ENCODE measurements at regions of chr6 and their contacts with region 1.

Region 1: DNA sequence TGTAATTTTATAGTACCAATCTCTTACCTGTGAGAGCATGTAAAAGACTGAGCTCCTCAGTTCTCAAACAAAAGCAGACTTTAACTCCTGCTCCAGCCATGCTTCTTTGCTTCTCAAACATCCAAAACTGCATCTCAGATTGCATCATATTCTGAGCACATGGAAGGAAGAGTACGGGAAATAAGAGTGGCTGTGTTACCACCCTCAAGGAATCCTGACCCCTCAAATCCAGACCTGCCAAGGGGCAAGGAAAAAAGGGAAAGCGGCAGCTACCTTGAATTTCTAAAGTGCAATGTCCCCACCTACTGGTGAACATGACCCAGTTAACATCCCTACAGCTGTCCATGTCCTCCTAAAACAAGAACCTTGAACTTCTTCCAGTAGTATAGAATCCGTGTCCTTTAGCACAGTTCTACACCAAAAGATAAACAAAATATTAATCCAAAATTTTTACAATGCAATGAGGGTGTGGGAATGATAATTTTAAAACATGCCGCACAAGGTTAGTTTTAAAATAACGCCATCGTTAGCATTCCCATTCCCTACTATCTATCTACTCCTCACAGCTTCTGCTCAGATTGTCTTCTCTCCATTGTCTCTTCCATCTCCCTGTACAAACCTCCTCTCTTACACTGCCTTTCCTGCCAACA is 34.1 kb upstream of the HLA-DQB1 start:
- DNase-seq: peak; percentile 17 to 45 (median 21)
- H3K4me3 ChIP-seq: no peak overlapping the region
- H3K27ac ChIP-seq: no peak overlapping the region
- H3K4me1 ChIP-seq: no peaks in the 10 kb centered on the region
- H3K27me3 ChIP-seq: no peaks in the 10 kb centered on the region
- CTCF ChIP-seq: peak in 2 of 3 donors; percentile 43 to 57
- EP300 ChIP-seq: no peak
- POLR2A ChIP-seq: no peak

Region 2: DNA sequence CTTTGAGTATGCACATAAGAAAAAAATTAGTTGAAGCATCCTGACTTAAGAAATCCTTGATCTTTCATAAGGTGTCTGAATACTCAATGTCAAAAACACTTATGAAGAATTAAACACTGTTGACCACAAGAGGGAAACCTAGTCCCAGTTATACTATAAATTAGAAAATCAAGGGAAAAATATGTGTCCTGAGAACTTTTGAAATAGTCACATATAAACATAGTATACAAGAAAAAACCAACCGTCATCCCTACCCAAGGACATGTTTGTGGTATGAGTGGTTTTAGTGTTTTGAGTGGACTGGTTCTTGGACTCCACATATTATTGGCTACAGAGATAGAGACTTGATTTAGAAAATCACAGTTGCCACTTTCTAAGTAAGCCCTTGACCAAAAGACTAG is 268.5 kb before region 1 on chr6:
- intact Hi-C with region 1: loop called in 3 of 4 experiments (anchors 5 to 10 kb)
- DNase-seq: no peak
- H3K4me3 ChIP-seq: no peak overlapping the region
- H3K27ac ChIP-seq: no peak overlapping the region
- H3K4me1 ChIP-seq: no peaks in the 10 kb centered on the region
- H3K27me3 ChIP-seq: peaks cover 3% of the 10 kb centered on the region
- CTCF ChIP-seq: peak; percentile 32 to 55 (median 32)
- EP300 ChIP-seq: no peak
- POLR2A ChIP-seq: no peak

Region 3: DNA sequence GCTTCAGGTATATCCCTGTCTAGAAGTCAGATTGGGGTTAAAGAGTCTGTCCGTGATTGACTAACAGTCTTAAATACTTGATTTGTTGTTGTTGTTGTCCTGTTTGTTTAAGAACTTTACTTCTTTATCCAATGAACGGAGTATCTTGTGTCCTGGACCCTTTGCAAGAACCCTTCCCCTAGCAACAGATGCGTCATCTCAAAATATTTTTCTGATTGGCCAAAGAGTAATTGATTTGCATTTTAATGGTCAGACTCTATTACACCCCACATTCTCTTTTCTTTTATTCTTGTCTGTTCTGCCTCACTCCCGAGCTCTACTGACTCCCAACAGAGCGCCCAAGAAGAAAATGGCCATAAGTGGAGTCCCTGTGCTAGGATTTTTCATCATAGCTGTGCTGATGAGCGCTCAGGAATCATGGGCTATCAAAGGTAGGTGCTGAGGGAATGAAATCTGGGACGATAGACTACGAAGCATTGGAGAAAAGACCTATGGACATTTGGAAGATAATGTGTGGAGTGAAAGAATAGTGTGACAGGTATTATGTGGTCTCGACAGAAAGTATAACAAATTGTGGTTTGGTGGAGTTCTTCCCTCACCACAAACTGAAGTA is 260.8 kb before region 1 on chr6 and contains the start of gene HLA-DRA:
- intact Hi-C with region 1: loop called in 3 of 4 experiments (anchors 5 to 10 kb)
- DNase-seq: no peak
- H3K4me3 ChIP-seq: no peak within 1 kb of the TSS
- H3K27ac ChIP-seq: no peak within 1 kb of the TSS
- H3K4me1 ChIP-seq: no peaks in the 10 kb centered on the region
- H3K27me3 ChIP-seq: no peaks in the 10 kb centered on the region
- CTCF ChIP-seq: no peak
- EP300 ChIP-seq: no peak
- POLR2A ChIP-seq: no peak
- total RNA-seq, gene HLA-DRA: 19.5 to 262 (median 130) TPM

Region 4: GRCh38 chr6:32853541-32854375 is 153.2 kb after region 1 on chr6 and contains the starts of genes PSMB9 and TAP1:
- intact Hi-C with region 1: no loop called
- DNase-seq: peak; percentile 91 to 96 (median 93)
- H3K4me3 ChIP-seq: peak within 1 kb of the TSS; percentile 94
- H3K27ac ChIP-seq: peak within 1 kb of the TSS; percentile 98
- H3K4me1 ChIP-seq: peaks cover 10% of the 10 kb centered on the region
- H3K27me3 ChIP-seq: no peaks in the 10 kb centered on the region
- CTCF ChIP-seq: peak; percentile 75 to 93 (median 91)
- EP300 ChIP-seq: peak; percentile 87
- POLR2A ChIP-seq: peak; percentile 92
- total RNA-seq, gene PSMB9: 9.5 to 28.3 (median 20.4) TPM
- total RNA-seq, gene TAP1: 17.7 to 30.7 (median 23.3) TPM

Region 5: DNA sequence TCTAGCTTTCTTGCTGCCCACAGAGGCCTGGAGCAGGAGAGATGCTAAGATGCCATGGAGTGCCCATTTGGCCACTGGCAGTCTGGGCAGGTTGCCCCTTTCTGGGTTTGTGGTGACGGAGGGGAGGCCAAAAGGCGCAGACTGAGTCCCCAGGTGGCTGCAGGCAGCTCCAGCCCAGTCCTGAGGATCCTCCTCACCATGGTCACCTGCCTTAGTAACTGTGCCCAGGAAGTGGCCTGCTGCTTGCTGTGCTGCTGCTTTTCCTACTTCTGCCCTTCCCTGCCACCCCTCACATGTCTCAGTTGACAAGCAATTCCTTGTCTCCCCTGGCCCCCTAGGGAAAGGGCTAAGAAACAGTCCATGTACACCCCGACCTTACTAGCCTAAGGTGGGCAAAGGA is 655.8 kb after region 1 on chr6:
- intact Hi-C with region 1: no loop called
- DNase-seq: no peak
- H3K4me3 ChIP-seq: no peak overlapping the region
- H3K27ac ChIP-seq: no peak overlapping the region
- H3K4me1 ChIP-seq: no peaks in the 10 kb centered on the region
- H3K27me3 ChIP-seq: no peaks in the 10 kb centered on the region
- CTCF ChIP-seq: no peak
- EP300 ChIP-seq: no peak
- POLR2A ChIP-seq: no peak